ENCODE measurements at regions of chr6 and their contacts with region 1.

Region 1: DNA sequence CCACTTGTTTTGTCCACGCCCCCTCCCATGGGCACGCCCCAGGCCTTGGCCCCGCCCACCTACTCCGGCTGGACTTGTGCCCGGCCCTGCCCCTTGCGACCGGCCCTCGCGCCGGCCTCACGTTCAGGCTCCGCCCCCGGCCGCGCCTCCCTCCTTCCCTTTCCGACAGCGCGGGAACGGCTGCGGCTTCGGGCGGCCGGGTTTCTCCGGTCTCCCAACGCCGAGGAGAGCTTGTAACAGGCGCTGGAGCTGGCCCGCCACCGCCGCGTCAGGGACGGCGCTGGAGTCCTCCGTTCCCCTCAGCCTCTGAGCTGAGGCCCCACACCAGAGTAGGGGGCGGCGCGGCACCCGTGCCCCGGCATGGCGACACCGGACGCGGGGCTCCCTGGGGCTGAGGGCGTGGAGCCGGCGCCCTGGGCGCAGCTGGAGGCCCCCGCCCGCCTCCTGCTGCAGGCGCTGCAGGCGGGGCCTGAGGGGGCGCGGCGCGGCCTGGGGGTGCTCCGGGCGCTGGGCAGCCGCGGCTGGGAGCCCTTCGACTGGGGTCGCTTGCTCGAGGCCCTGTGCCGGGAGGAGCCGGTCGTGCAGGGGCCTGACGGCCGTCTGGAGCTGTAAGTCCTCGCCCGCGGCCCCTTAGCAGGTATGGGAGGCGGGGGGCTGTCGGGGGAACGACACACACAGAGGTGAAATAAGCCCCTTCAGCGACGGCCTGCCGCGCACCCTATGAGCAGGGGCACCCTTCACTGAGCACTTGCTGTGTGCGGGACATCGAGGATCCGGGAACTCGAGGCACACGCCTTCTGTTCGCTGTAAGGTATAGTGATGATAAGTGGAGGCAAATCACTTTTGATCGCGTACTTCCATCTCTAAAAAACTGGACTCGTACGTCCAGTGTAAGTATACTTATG is at the start of gene FANCE:
- DNase-seq: peak; percentile 95
- ATAC-seq: peak; percentile 80
- H3K4me3 Mint-ChIP-seq: peak within 1 kb of the TSS; percentile 86
- H3K27ac Mint-ChIP-seq: peak within 1 kb of the TSS; percentile 69
- H3K4me1 Mint-ChIP-seq: peaks cover 40% of the 10 kb centered on the region
- H3K27me3 Mint-ChIP-seq: peaks cover 4% of the 10 kb centered on the region
- total RNA-seq, gene FANCE: 14.9 to 15.9 TPM

Region 2: GRCh38 chr6:35342258-35343091 is 110.0 kb before region 1 on chr6 and contains the start of gene PPARD:
- POLR2A ChIA-PET with region 1: interaction called, 23 read pairs
- DNase-seq: peak; percentile 100
- ATAC-seq: peak; percentile 96
- H3K4me3 Mint-ChIP-seq: peak within 1 kb of the TSS; percentile 97
- H3K27ac Mint-ChIP-seq: peak within 1 kb of the TSS; percentile 88
- H3K4me1 Mint-ChIP-seq: peaks cover 42% of the 10 kb centered on the region
- H3K27me3 Mint-ChIP-seq: peaks cover 5% of the 10 kb centered on the region
- total RNA-seq, gene PPARD: 43.0 to 45.9 TPM

Region 3: GRCh38 chr6:35419417-35419816 is 33.0 kb before region 1 on chr6:
- POLR2A ChIA-PET with region 1: interaction called, 11 read pairs
- DNase-seq: no peak
- ATAC-seq: peak; percentile 68
- H3K4me3 Mint-ChIP-seq: peak overlapping the region; percentile 46
- H3K27ac Mint-ChIP-seq: peak overlapping the region; percentile 96
- H3K4me1 Mint-ChIP-seq: peaks cover 48% of the 10 kb centered on the region
- H3K27me3 Mint-ChIP-seq: no peaks in the 10 kb centered on the region